ENCODE measurements at regions of chr12 and their contacts with region 1.

Region 1: GRCh38 chr12:90896164-90896563 is 58.8 kb downstream of the CCER1 start:
- DNase-seq: no peak
- H3K4me3 ChIP-seq: no peak overlapping the region
- H3K4me3 Mint-ChIP-seq: no peak overlapping the region
- H3K27ac Mint-ChIP-seq: no peak overlapping the region
- H3K4me1 ChIP-seq: peaks cover 24% of the 10 kb centered on the region
- H3K4me1 Mint-ChIP-seq: peaks cover 6% of the 10 kb centered on the region
- H3K27me3 ChIP-seq: no peaks in the 10 kb centered on the region
- H3K27me3 Mint-ChIP-seq: no peaks in the 10 kb centered on the region
- CTCF ChIP-seq: no peak

Region 2: DNA sequence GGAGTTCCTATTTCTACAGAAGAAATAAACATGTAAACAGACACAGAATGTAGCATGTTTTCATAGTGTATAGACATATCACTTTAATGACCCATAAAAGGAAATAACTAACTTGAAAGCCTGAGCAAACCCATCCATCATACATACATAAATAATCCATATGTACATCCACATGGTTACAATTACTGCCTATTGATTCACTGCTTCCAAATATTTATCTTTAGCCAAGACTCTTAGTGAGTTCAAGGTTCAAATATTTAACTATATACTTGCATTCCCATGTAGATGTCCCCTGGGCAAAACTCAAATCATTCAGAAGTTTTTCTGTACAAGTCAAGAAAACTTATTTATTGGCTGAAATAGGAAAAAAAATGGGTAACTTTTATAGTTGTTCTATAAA is 36.6 kb before region 1 on chr12:
- CTCF ChIA-PET with region 1: interaction called, 3 read pairs
- POLR2A ChIA-PET with region 1: no interaction called
- intact Hi-C with region 1: loop called (anchors 1 kb)
- DNase-seq: peak in 1 of 2 experiments; percentile 6
- H3K4me3 ChIP-seq: no peak overlapping the region
- H3K4me3 Mint-ChIP-seq: no peak overlapping the region
- H3K27ac Mint-ChIP-seq: no peak overlapping the region
- H3K4me1 ChIP-seq: no peaks in the 10 kb centered on the region
- H3K4me1 Mint-ChIP-seq: no peaks in the 10 kb centered on the region
- H3K27me3 ChIP-seq: no peaks in the 10 kb centered on the region
- H3K27me3 Mint-ChIP-seq: no peaks in the 10 kb centered on the region
- CTCF ChIP-seq: no peak

Measured in Caco-2 (cell line).